ENCODE measurements at regions of chr14 and their contacts with region 1.

Region 1: GRCh38 chr14:94412671-94413638 is 24.6 kb upstream of the SERPINA1 start:
- DNase-seq: no peak
- H3K4me3 ChIP-seq: no peak overlapping the region
- H3K27ac ChIP-seq: no peak overlapping the region
- H3K4me1 ChIP-seq: peaks cover 0 to 7% (median 0%) of the 10 kb centered on the region in 4 experiments; a peak in 1 of 7 replicates
- H3K27me3 ChIP-seq: no peaks in the 10 kb centered on the region
- CTCF ChIP-seq: peak; percentile 30 to 79 (median 79)
- EP300 ChIP-seq: no peak
- POLR2A ChIP-seq: no peak
- RAD21 ChIP-seq: peak; percentile 78 to 88

Region 2: GRCh38 chr14:94355191-94355797 is 57.7 kb before region 1 on chr14:
- CTCF ChIA-PET with region 1: interaction called, 15 read pairs
- POLR2A ChIA-PET with region 1: no interaction called
- DNase-seq: peak; percentile 56 to 61
- H3K4me3 ChIP-seq: no peak overlapping the region
- H3K27ac ChIP-seq: no peak overlapping the region
- H3K4me1 ChIP-seq: peaks cover 0 to 8% (median 3%) of the 10 kb centered on the region in 4 experiments; a peak in 1 of 7 replicates
- H3K27me3 ChIP-seq: no peaks in the 10 kb centered on the region
- CTCF ChIP-seq: peak; percentile 74 to 82 (median 75)
- EP300 ChIP-seq: no peak
- POLR2A ChIP-seq: no peak
- RAD21 ChIP-seq: peak; percentile 83 to 87

Region 3: DNA sequence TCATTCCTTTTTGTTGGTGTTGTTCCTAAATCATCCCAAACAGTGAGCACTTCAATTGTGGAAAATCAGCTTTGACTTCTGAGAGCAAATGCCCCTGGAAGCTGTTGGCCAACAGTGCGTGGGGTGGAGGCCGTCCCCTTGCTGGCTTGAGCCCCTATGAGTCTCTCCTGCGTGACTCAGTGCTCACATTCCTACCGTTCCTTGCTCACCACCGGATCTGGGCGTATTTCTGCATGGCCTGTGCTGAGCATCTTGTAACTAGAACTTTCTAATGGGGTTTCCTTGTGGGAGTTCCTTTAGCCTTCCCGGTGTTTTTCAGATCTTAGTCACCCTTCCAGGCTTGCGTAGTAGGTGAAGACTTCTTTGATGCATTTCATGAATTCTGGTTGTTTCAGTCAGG is 39.2 kb before region 1 on chr14:
- CTCF ChIA-PET with region 1: interaction called, 20 read pairs
- POLR2A ChIA-PET with region 1: no interaction called
- DNase-seq: no peak
- H3K4me3 ChIP-seq: no peak overlapping the region
- H3K27ac ChIP-seq: no peak overlapping the region
- H3K4me1 ChIP-seq: peaks cover 6 to 12% (median 8%) of the 10 kb centered on the region in 4 experiments
- H3K27me3 ChIP-seq: no peaks in the 10 kb centered on the region
- CTCF ChIP-seq: no peak
- EP300 ChIP-seq: no peak
- POLR2A ChIP-seq: no peak
- RAD21 ChIP-seq: no peak

Region 4: GRCh38 chr14:94423453-94424056 is 10.6 kb after region 1 on chr14:
- CTCF ChIA-PET with region 1: interaction called, 12 read pairs
- POLR2A ChIA-PET with region 1: no interaction called
- DNase-seq: peak; percentile 67 to 88
- H3K4me3 ChIP-seq: no peak overlapping the region
- H3K27ac ChIP-seq: no peak overlapping the region
- H3K4me1 ChIP-seq: 0 out of 7 replicates have a peak, but pooled peaks cover 0 to 2% (median 0%) of the 10 kb centered on the region in 4 experiments
- H3K27me3 ChIP-seq: no peaks in the 10 kb centered on the region
- CTCF ChIP-seq: peak; percentile 62 to 88 (median 83)
- EP300 ChIP-seq: no peak
- POLR2A ChIP-seq: no peak
- RAD21 ChIP-seq: peak; percentile 72 to 80